ENCODE measurements at regions of chr2 and their contacts with region 1.

Region 1: DNA sequence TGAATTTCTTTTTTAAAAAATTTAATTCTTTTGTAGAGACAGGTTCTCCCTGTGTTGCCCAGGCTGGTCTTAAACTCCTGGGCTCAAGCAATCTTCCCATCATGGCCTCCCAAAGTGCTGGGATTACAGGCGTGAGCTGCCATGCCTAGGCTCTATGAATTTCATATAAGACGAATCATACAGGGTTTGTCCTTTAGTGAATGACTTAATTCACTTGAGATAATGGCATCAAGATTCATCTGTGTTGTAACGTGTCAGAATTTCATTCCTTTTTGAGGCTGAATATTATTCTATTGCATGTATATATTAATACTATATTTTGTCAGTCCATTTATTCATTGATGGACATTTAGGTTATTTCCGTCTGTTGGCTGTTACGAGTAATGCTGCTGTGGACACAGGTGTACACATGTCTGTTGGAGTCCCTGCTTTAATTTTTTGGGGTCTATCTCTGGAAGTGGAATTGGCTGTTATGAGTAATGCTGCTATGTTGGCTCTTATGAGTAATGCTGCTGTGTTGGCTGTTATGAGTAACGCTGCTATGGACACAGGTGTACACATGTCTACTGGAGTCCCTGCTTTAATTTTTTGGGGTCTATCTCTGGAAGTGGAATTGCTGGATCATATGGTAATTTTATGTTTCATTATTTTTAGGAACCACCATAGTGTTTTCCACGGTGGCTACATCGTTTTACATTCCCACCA is 210.6 kb downstream of the CAMKMT start:
- DNase-seq: no peak
- ATAC-seq: no peak
- H3K4me3 ChIP-seq: no peak overlapping the region
- H3K27ac ChIP-seq: no peak overlapping the region
- H3K4me1 ChIP-seq: no peaks in the 10 kb centered on the region; the same call in 1 of the 2 replicates
- H3K27me3 ChIP-seq: no peaks in the 10 kb centered on the region
- CTCF ChIP-seq: no peak
- EP300 ChIP-seq: no peak
- POLR2A ChIP-seq: no peak
- RAD21 ChIP-seq: no peak

Region 2: DNA sequence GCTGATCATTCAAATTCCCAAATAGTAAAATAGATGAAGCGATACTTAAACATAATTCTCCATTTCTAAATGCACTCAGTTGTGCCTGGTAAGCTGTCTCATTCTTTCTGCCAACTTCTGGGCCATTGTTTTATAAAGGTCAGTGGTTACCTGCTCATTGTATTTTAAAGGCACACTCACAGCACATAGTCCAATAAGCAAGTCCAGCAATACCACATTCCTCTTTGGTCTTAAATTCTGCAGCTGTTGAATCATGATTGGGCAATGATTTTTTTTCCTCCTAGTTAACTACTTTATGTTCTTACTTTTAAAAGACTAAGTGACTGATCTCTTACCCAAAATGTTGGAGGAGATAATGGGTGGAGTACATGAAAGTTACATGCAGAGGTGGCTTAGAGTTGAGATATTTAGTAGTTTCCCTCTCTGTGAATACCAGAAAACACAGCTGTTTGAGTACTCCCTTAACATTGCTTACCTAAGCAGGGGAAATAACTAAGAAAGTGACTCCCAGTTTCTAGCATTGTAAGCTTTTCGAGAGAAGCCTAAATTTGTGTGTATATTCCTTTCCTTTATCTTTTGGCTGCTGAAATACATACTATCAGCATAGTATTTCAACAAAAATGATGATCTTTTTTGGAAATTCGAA is 10.1 kb after region 1 on chr2:
- CTCF ChIA-PET with region 1: no interaction called
- POLR2A ChIA-PET with region 1: no interaction called
- in situ Hi-C with region 1: no loop called
- intact Hi-C with region 1: loop called (anchors 1 kb)
- DNase-seq: no peak
- ATAC-seq: no peak
- H3K4me3 ChIP-seq: no peak overlapping the region
- H3K27ac ChIP-seq: no peak overlapping the region
- H3K4me1 ChIP-seq: no peaks in the 10 kb centered on the region
- H3K27me3 ChIP-seq: no peaks in the 10 kb centered on the region
- CTCF ChIP-seq: no peak
- EP300 ChIP-seq: no peak
- POLR2A ChIP-seq: no peak
- RAD21 ChIP-seq: no peak